ENCODE measurements at regions of chr5 and their contacts with region 1.

Region 1: DNA sequence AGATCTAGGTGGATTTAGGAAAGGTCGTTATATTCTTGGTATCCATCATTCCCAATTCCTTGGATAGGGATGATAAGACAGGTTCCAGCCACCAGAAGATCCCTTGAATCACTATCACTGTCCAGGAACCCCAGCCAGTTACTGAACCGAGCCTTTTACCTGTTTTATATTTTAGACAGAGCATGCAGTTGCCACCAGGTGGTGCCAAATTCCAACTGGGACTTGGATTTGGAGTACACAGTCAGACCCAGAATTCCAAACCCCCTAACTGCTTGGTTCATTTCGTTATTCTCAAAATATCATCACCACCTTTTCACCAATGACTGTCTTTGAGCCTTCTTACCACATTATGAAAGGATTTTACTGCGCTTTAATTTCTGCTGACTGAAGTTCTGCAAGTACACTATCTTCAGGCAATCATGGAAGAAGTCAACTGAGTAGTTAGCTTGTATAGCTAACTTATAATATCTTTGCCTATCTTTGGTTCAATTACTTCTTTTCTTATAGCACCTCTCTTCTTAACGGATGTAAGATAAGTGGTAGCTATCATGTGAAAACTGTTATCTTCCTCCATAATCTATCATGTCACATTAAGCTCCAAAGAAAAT is 191.8 kb downstream of the PRR16 start:
- DNase-seq: peak; percentile 71
- H3K4me3 Mint-ChIP-seq: no peak overlapping the region
- H3K27ac Mint-ChIP-seq: no peak overlapping the region
- H3K4me1 Mint-ChIP-seq: no peaks in the 10 kb centered on the region
- H3K27me3 Mint-ChIP-seq: no peaks in the 10 kb centered on the region
- CTCF ChIP-seq: peak; percentile 66

Region 2: GRCh38 chr5:120396186-120396585 is 259.7 kb before region 1 on chr5:
- CTCF ChIA-PET with region 1: no interaction called
- POLR2A ChIA-PET with region 1: no interaction called
- intact Hi-C with region 1: no loop called
- DNase-seq: peak; percentile 9
- H3K4me3 Mint-ChIP-seq: no peak overlapping the region
- H3K27ac Mint-ChIP-seq: no peak overlapping the region
- H3K4me1 Mint-ChIP-seq: peaks cover 13% of the 10 kb centered on the region
- H3K27me3 Mint-ChIP-seq: no peaks in the 10 kb centered on the region
- CTCF ChIP-seq: no peak

Region 3: DNA sequence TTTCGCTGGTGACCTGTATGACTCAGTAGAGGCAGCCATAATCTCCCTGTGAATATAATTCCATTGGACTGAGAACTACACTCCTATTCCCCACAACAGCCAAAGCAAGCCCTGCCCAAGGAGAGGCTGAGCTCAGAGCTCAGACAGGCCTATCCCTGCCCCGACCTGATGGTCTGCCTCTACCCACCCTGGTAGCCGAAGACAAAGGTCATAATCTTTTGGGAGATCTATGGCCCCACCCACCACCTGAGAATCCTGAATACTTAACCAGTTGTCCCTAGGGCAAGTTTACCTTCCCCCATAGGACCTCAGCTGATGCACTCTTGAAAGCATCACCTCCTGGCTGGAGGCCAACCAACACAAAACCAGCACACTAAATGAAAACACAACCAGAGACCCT is 24.4 kb before region 1 on chr5:
- CTCF ChIA-PET with region 1: interaction called, 10 read pairs
- POLR2A ChIA-PET with region 1: no interaction called
- intact Hi-C with region 1: no loop called
- DNase-seq: no peak
- H3K4me3 Mint-ChIP-seq: no peak overlapping the region
- H3K27ac Mint-ChIP-seq: no peak overlapping the region
- H3K4me1 Mint-ChIP-seq: no peaks in the 10 kb centered on the region
- H3K27me3 Mint-ChIP-seq: no peaks in the 10 kb centered on the region
- CTCF ChIP-seq: no peak

Region 4: GRCh38 chr5:120644516-120644915 is 11.4 kb before region 1 on chr5:
- CTCF ChIA-PET with region 1: interaction called, 13 read pairs
- POLR2A ChIA-PET with region 1: no interaction called
- intact Hi-C with region 1: no loop called
- DNase-seq: peak; percentile 21
- H3K4me3 Mint-ChIP-seq: no peak overlapping the region
- H3K27ac Mint-ChIP-seq: no peak overlapping the region
- H3K4me1 Mint-ChIP-seq: peaks cover 22% of the 10 kb centered on the region
- H3K27me3 Mint-ChIP-seq: no peaks in the 10 kb centered on the region
- CTCF ChIP-seq: no peak

Region 5: GRCh38 chr5:120789918-120790317 is 134.0 kb after region 1 on chr5:
- CTCF ChIA-PET with region 1: no interaction called
- POLR2A ChIA-PET with region 1: no interaction called
- intact Hi-C with region 1: no loop called
- DNase-seq: no peak
- H3K4me3 Mint-ChIP-seq: no peak overlapping the region
- H3K27ac Mint-ChIP-seq: no peak overlapping the region
- H3K4me1 Mint-ChIP-seq: peaks cover 6% of the 10 kb centered on the region
- H3K27me3 Mint-ChIP-seq: no peaks in the 10 kb centered on the region
- CTCF ChIP-seq: no peak

Measured in MCF 10A (cell line).